ENCODE measurements at regions of chr11 and their contacts with region 1.

Region 1: DNA sequence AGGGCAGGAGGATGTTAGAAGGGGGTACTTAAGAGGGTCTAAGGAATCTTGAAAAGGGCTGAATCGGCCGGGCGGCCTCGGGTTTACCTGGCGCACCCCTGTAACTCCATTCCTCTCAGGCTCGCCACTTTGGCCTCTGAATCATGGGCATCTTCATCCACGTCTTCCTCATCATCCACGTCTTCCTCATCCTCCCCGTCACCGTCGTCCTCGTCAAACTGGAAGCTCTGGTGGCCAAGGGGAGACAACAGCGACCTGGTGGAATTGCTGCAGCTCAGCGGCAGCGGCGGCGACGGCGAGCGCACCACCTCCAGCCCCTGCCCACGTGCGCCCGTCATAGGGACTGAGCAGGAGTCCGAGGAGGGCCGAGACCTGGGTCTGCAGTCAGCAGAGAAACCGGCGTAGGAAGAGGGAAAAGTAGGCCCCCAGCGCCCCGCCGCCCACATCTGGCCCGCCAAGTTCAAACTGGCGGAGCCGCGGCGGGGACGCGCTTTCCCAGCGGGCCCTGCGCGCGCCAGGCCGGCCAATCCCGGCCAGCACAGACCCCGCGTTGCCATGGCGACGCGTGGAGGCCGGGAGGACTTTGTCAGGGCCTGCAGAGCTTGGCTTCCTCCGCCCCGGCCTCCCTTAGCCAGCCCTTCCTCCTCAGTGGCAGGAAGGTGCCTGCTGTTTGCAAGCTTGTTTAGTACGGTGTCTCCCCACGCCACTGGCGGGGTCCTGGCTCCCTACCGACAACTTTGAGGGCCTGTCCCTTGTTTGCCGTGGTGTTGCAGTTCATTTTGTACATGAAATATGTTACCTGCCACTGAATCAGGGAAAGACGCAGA is at the start of gene CCDC34:
- DNase-seq: peak; percentile 87
- H3K4me3 Mint-ChIP-seq: peak within 1 kb of the TSS; percentile 95
- H3K27ac Mint-ChIP-seq: peak within 1 kb of the TSS; percentile 77
- H3K4me1 Mint-ChIP-seq: peaks cover 22% of the 10 kb centered on the region
- H3K27me3 Mint-ChIP-seq: no peaks in the 10 kb centered on the region
- total RNA-seq, gene CCDC34: 28.2 to 29.9 TPM

Region 2: DNA sequence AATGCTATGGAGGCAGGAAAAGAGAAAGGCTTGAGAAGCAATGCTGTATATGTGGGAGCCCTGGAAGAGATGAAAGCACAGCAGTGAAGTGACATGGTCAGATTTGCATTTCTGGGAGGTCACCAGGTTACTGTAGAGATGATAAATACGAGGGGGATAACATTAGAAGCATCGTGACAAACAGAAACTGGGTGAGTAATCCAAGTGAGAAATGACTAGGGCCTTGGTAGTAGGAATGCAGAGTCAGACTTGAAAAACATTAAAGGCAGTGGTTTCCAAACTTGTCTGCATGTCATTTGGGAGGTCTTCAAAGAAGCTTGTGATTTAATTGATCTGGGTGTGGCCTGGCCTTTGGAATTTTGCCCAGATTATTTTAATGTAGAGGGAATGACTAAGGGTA is 43.9 kb before region 1 on chr11:
- CTCF ChIA-PET with region 1: no interaction called
- intact Hi-C with region 1: loop called (anchors 1 kb)
- DNase-seq: peak; percentile 23
- H3K4me3 Mint-ChIP-seq: no peak overlapping the region
- H3K27ac Mint-ChIP-seq: no peak overlapping the region
- H3K4me1 Mint-ChIP-seq: peaks cover 9% of the 10 kb centered on the region
- H3K27me3 Mint-ChIP-seq: peaks cover 7% of the 10 kb centered on the region

Region 3: DNA sequence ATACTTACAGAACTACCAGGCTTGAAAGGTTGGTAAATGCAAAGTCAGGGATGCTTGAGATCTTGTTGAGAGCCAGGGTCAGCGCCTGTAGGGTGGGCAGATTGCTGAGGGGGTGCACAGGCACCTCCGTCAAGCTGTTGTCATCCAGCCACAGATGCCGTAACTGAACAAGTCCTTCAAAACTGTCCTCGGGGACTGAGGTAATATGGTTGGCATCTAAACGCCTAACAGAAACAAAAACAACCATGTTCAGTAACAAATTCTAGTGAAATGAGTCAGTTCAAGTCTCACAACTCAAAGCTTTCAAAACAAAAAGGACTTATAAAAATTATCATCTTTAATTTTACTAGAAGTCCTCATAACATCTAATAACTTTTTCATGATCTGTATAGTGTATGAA is 22.3 kb after region 1 on chr11:
- CTCF ChIA-PET with region 1: no interaction called
- intact Hi-C with region 1: no loop called
- DNase-seq: no peak
- H3K4me3 Mint-ChIP-seq: no peak overlapping the region
- H3K27ac Mint-ChIP-seq: no peak overlapping the region
- H3K4me1 Mint-ChIP-seq: no peaks in the 10 kb centered on the region
- H3K27me3 Mint-ChIP-seq: no peaks in the 10 kb centered on the region

Region 4: DNA sequence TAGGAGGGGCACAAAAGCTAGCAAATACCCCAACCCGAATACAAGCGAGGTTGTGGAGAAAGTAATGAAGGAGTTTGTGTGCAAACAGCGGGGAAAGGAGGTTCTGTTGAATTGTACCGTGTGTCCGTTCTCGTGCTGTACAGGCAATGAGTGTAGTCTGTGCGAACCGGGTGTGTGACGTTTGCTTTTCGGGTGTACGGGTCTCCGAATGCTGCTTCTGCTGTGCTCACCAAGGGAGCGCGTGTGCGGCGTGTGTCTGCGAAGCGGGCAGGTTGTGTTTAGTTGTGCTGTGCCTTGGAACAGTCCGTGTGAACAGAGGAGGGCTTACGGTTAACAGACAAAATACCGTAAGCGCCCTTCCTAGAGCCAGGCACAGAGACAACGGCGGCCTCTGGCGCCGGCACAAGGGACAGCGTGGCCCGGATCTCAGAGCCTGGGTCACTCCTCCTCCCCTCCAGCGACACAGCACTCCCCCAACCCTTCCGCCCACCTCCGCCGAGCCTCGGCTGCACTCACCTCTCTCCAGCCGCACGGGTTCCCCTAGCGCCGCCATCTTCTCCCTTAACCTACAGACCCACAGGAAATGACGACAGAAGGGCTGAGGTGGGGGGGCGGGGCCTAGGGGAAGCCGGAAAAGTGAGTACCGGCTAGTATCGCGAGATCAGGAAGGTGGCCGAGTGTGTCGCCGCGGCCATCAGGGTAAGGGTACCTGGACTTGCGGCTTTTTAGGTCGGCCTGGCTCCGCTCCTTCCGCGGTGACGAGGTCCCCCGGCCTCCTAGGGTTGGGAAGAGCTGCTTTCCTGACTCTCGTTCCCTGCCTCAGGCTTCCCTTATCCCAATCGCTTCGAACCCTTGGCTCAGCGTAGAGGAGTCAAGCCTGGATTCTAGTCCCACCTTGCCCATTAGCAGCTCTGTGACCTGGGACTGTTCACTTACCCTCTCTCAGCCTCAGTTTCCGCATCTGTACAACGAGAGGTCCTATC is 143.5 kb after region 1 on chr11 and contains the start of gene LIN7C:
- CTCF ChIA-PET with region 1: no interaction called
- intact Hi-C with region 1: loop called (anchors 1 kb)
- DNase-seq: peak; percentile 98
- H3K4me3 Mint-ChIP-seq: peak within 1 kb of the TSS; percentile 96
- H3K27ac Mint-ChIP-seq: peak within 1 kb of the TSS; percentile 95
- H3K4me1 Mint-ChIP-seq: peaks cover 46% of the 10 kb centered on the region
- H3K27me3 Mint-ChIP-seq: no peaks in the 10 kb centered on the region
- total RNA-seq, gene LIN7C: 30.5 to 31.1 TPM

Region 5: DNA sequence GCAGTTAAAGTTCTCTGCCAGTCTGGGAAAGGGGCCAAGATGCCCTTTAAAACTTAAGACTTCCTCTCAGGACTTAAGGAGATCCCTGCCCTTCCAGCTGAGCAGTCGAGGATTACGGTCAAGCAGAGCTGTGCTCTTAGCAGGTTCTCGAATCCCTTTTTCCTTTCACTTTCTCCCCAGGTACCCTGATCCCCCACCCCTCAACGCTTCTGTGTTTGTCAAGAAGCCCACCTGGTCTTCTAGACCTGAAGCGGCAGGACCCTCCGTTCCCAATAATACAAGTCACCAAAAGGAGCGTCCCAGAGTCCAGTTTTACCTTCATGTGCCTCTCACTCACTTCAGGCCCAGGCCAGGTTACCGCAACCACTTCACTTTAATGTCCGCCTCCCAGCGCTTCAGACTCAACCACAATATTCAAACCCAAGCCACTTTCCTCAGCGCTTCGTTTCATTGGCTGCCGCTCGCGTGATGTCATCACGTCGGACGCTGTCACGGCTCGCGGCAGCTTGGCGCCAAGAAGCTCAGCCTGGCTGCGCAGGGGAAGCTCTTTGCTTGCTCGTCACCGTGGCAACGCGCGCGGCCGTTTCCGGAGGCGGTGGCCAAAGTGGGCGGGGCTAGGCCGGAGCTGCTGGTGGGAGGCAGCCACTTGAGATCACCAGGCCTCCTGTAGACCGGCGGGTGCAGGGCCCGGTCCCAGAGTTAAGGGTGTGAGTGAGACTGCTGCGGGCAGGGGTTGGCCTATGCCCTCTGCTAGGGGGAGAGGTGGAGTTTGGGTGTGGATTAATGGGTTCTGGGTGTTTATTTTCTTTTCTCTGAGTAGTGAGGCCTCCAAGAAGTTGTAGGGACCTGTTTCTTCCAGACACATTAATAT is 745.0 kb after region 1 on chr11 and contains the starts of genes KIF18A and METTL15:
- CTCF ChIA-PET with region 1: no interaction called
- intact Hi-C with region 1: loop called (anchors 5 kb)
- DNase-seq: peak; percentile 99
- H3K4me3 Mint-ChIP-seq: peak within 1 kb of the TSS; percentile 99
- H3K27ac Mint-ChIP-seq: peak within 1 kb of the TSS; percentile 98
- H3K4me1 Mint-ChIP-seq: peaks cover 33% of the 10 kb centered on the region
- H3K27me3 Mint-ChIP-seq: no peaks in the 10 kb centered on the region
- total RNA-seq, gene KIF18A: 34.7 to 36.5 TPM
- total RNA-seq, gene METTL15: 18.0 to 19.8 TPM